Heart left ventricle (tissue), 16 donors: ENCODE measurements at regions of chr2 and their contacts with region 1.

Region 1: GRCh38 chr2:103213028-103213542 is 451.3 kb downstream of the TMEM182 start:
- DNase-seq: no peak
- ATAC-seq: no peak
- H3K4me3 ChIP-seq: no peak overlapping the region
- H3K27ac ChIP-seq: no peak overlapping the region
- H3K4me1 ChIP-seq: no peaks in the 10 kb centered on the region
- H3K27me3 ChIP-seq: no peaks in the 10 kb centered on the region
- CTCF ChIP-seq: no peak
- POLR2A ChIP-seq: no peak

Region 2: GRCh38 chr2:103276869-103277268 is 63.8 kb after region 1 on chr2:
- intact Hi-C with region 1: loop called in 1 of 10 experiments (anchors 2 kb)
- DNase-seq: no peak
- ATAC-seq: no peak
- H3K4me3 ChIP-seq: no peak overlapping the region
- H3K27ac ChIP-seq: no peak overlapping the region
- H3K4me1 ChIP-seq: no peaks in the 10 kb centered on the region
- H3K27me3 ChIP-seq: no peaks in the 10 kb centered on the region
- CTCF ChIP-seq: no peak
- POLR2A ChIP-seq: no peak

Region 3: DNA sequence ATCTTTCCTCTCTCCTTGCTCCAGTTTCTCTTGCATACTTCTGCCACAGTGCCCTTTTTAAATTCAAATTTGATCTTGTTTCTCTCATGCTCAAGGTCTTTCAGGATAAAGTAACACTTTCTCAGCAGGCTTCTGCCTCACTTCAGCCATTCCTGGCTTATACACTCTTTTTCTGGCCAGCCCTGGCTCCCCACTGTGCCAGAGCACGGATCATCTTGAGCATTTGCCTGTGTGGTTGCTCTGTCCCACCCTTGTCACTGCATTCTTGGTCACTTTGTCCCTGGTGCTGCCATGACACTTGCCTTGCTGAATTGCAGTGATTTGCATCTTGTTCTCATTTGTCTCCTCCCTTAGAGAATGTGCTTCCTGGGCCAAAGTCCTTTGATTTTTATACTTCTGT is 183.1 kb after region 1 on chr2:
- intact Hi-C with region 1: no loop called
- DNase-seq: no peak
- ATAC-seq: no peak
- H3K4me3 ChIP-seq: no peak overlapping the region
- H3K27ac ChIP-seq: no peak overlapping the region
- H3K4me1 ChIP-seq: no peaks in the 10 kb centered on the region
- H3K27me3 ChIP-seq: no peaks in the 10 kb centered on the region
- CTCF ChIP-seq: no peak
- POLR2A ChIP-seq: no peak